ENCODE measurements at regions of chr4 and their contacts with region 1.

Region 1: GRCh38 chr4:173990126-173990868 is 293.2 kb downstream of the FBXO8 start:
- DNase-seq: no peak
- H3K4me3 ChIP-seq: 0 out of 4 replicates have a peak overlapping the region, but pooled peaks of 1 of the 2 experiments have one; percentile 2
- H3K27ac ChIP-seq: peak overlapping the region; percentile 15 to 100
- H3K4me1 ChIP-seq: peaks cover 18 to 34% of the 10 kb centered on the region in 2 experiments; a peak in 3 of 4 replicates
- H3K27me3 ChIP-seq: no peaks in the 10 kb centered on the region
- CTCF ChIP-seq: peak; percentile 85
- EP300 ChIP-seq: peak in 1 of 2 experiments; percentile 22; a peak in 1 of 4 replicates
- RAD21 ChIP-seq: peak; percentile 85

Region 2: GRCh38 chr4:173505924-173506518 is 484.3 kb before region 1 on chr4:
- CTCF ChIA-PET with region 1: interaction called, 10 read pairs
- POLR2A ChIA-PET with region 1: interaction called, 32 read pairs
- DNase-seq: peak; percentile 77
- H3K4me3 ChIP-seq: peak overlapping the region in 1 of 2 experiments; percentile 66; a peak in 2 of 4 replicates
- H3K27ac ChIP-seq: peak overlapping the region; percentile 82 to 99
- H3K4me1 ChIP-seq: peaks cover 8 to 51% of the 10 kb centered on the region in 2 experiments; a peak in 2 of 4 replicates
- H3K27me3 ChIP-seq: no peaks in the 10 kb centered on the region
- CTCF ChIP-seq: peak; percentile 84
- EP300 ChIP-seq: no peak
- RAD21 ChIP-seq: peak; percentile 83

Region 3: DNA sequence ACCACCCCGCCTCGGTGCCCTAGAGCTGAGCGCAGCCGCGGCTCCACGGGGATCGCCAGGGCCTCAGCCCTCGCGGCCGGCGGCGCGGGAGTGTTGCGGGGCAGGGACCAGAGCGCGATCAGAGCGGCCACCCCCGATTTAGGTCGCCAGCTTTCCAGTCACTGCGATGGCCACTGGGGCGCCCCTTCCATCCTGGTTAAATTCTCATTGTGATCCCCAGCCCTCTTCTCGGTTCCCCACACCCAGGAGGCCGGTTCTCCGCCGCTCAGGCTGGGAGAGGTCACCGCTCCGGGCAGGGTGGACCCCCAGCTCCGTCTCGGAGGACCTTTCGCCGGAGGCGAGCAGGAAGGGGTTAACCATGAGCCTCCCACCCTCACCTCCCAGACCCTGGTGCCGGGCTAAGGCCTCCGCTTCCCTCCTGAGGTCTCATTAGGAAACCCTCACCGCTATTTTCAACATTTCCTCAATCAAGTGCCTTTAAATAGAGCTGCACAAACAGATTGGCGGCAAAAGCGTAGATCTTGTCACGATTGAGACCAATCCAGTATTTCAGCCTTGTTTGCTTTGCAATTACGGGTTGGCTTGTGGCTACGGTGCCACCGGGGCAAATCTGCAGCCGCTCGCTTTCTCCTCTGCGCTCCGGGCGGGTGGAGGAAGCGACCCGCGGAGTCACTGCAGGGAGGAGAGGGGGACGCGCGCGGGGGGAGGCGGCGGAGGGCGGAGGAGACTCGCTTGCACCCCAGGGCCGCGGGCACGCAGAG is 452.0 kb before region 1 on chr4:
- CTCF ChIA-PET with region 1: interaction called, 57 read pairs
- POLR2A ChIA-PET with region 1: interaction called, 64 read pairs
- DNase-seq: peak; percentile 68
- H3K4me3 ChIP-seq: peak overlapping the region; percentile 61 to 62
- H3K27ac ChIP-seq: peak overlapping the region; percentile 91 to 99
- H3K4me1 ChIP-seq: peaks cover 12 to 34% of the 10 kb centered on the region in 2 experiments; a peak in 3 of 4 replicates
- H3K27me3 ChIP-seq: no peaks in the 10 kb centered on the region
- CTCF ChIP-seq: no peak
- EP300 ChIP-seq: no peak
- RAD21 ChIP-seq: no peak

Region 4: GRCh38 chr4:173766171-173766600 is 224.1 kb before region 1 on chr4:
- CTCF ChIA-PET with region 1: interaction called, 14 read pairs
- POLR2A ChIA-PET with region 1: interaction called, 18 read pairs
- DNase-seq: peak; percentile 67
- H3K4me3 ChIP-seq: no peak overlapping the region
- H3K27ac ChIP-seq: peak overlapping the region in 1 of 2 experiments; percentile 100; a peak in 2 of 4 replicates
- H3K4me1 ChIP-seq: peaks cover 0 to 45% of the 10 kb centered on the region in 2 experiments; a peak in 2 of 4 replicates
- H3K27me3 ChIP-seq: no peaks in the 10 kb centered on the region
- CTCF ChIP-seq: no peak
- EP300 ChIP-seq: peak; percentile 29 to 100; a peak in 2 of 4 replicates
- RAD21 ChIP-seq: peak; percentile 53

Region 5: GRCh38 chr4:173935622-173936405 is 54.5 kb before region 1 on chr4:
- CTCF ChIA-PET with region 1: interaction called, 66 read pairs
- POLR2A ChIA-PET with region 1: interaction called, 48 read pairs
- DNase-seq: no peak
- H3K4me3 ChIP-seq: no peak overlapping the region
- H3K27ac ChIP-seq: peak overlapping the region; percentile 39 to 100; a peak in 3 of 4 replicates
- H3K4me1 ChIP-seq: peaks cover 20 to 74% of the 10 kb centered on the region in 2 experiments; a peak in 3 of 4 replicates
- H3K27me3 ChIP-seq: no peaks in the 10 kb centered on the region
- CTCF ChIP-seq: no peak
- EP300 ChIP-seq: peak in 1 of 2 experiments; percentile 66; a peak in 2 of 4 replicates
- RAD21 ChIP-seq: no peak; the same call in 1 of the 2 replicates

Region 6: GRCh38 chr4:173958445-173958844 is 31.9 kb before region 1 on chr4:
- CTCF ChIA-PET with region 1: no interaction called
- POLR2A ChIA-PET with region 1: no interaction called
- DNase-seq: no peak
- H3K4me3 ChIP-seq: no peak overlapping the region
- H3K27ac ChIP-seq: peak overlapping the region in 1 of 2 experiments; percentile 34; a peak in 1 of 4 replicates
- H3K4me1 ChIP-seq: no peaks in the 10 kb centered on the region; a peak in 2 of 4 replicates
- H3K27me3 ChIP-seq: no peaks in the 10 kb centered on the region
- CTCF ChIP-seq: no peak
- EP300 ChIP-seq: no peak
- RAD21 ChIP-seq: no peak

Region 7: GRCh38 chr4:174069848-174070330 is 79.6 kb after region 1 on chr4:
- CTCF ChIA-PET with region 1: interaction called, 20 read pairs
- POLR2A ChIA-PET with region 1: interaction called, 19 read pairs
- DNase-seq: peak; percentile 69
- H3K4me3 ChIP-seq: no peak overlapping the region
- H3K27ac ChIP-seq: peak overlapping the region in 1 of 2 experiments; percentile 100; a peak in 2 of 4 replicates
- H3K4me1 ChIP-seq: peaks cover 0 to 26% of the 10 kb centered on the region in 2 experiments; a peak in 2 of 4 replicates
- H3K27me3 ChIP-seq: no peaks in the 10 kb centered on the region
- CTCF ChIP-seq: no peak
- EP300 ChIP-seq: peak; percentile 82 to 100
- RAD21 ChIP-seq: peak; percentile 46

Measured in SK-N-SH (cell line).